Right cardiac atrium (tissue), 5 donors: ENCODE measurements at regions of chr3 and their contacts with region 1.

Region 1: GRCh38 chr3:48465531-48466378 is 19.2 kb downstream of the ATRIP start:
- DNase-seq: peak; percentile 98
- ATAC-seq: peak; percentile 96
- H3K4me3 ChIP-seq: peak overlapping the region; percentile 54
- H3K27ac ChIP-seq: peak overlapping the region; percentile 98
- H3K4me1 ChIP-seq: peaks cover 5% of the 10 kb centered on the region
- H3K27me3 ChIP-seq: no peaks in the 10 kb centered on the region

Region 2: DNA sequence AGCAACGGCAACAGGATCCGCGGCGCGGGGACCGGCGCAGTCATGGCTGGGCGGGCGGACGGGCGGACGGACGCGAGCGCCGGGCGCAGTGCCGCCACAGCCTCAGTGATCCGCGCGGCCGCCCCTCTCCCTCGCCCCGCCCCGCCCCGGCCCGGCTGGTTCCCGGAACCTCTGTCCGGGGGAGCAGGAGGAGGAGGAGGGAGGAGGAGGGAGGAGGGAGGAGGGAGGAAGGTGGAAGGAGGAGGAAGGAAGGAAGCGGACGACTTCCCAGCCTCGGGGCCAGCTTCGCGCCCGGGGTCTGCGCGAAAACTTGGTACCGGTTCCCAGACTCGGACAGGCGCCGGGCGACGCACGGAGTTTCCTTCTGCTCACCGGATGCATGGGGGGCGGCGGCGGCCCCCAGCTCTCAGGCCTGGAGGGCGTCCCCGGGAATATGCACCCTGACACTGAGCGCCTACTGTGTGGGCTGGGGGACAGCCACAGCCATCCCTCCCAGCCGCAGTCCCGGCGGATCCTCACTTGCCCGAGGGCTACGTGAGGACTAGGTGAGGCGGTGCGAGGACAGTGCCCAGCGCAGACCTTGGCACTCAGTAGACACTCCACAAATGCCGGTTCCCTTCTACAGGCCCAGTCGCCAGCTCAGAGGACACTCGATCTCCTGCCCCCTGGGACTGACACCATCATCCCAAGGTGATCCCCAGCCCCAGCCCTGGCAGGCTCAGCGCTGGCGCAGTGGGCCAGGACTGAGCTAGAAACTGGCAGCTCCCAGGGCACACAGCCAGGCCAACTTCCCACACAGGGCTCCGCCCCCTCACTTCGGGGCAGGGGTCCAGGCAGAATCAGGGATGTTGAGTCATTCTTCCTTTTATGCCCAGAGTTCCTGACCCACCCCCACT is 38.5 kb after region 1 on chr3 and contains the start of gene SHISA5:
- intact Hi-C with region 1: loop called in 2 of 4 experiments (anchors 5 kb)
- DNase-seq: peak; percentile 90 to 96 (median 95)
- ATAC-seq: peak; percentile 93
- H3K4me3 ChIP-seq: peak within 1 kb of the TSS; percentile 51
- H3K27ac ChIP-seq: peak within 1 kb of the TSS; percentile 72
- H3K4me1 ChIP-seq: peaks cover 6% of the 10 kb centered on the region
- H3K27me3 ChIP-seq: no peaks in the 10 kb centered on the region
- total RNA-seq, gene SHISA5: 72.9 to 93.1 (median 76.2) TPM

Region 3: GRCh38 chr3:48548729-48549705 is 83.3 kb after region 1 on chr3:
- intact Hi-C with region 1: loop called (anchors 2 to 5 kb)
- DNase-seq: peak; percentile 87 to 95 (median 94)
- ATAC-seq: peak; percentile 91 to 92
- H3K4me3 ChIP-seq: no peak overlapping the region
- H3K27ac ChIP-seq: no peak overlapping the region
- H3K4me1 ChIP-seq: no peaks in the 10 kb centered on the region
- H3K27me3 ChIP-seq: no peaks in the 10 kb centered on the region

Region 4: GRCh38 chr3:48595526-48596121 is 129.9 kb after region 1 on chr3:
- intact Hi-C with region 1: no loop called
- DNase-seq: peak; percentile 66 to 69 (median 67)
- ATAC-seq: peak in 1 of 2 donors; percentile 12
- H3K4me3 ChIP-seq: no peak overlapping the region
- H3K27ac ChIP-seq: peak overlapping the region; percentile 94
- H3K4me1 ChIP-seq: peaks cover 25% of the 10 kb centered on the region
- H3K27me3 ChIP-seq: no peaks in the 10 kb centered on the region